Aorta (tissue), 5 donors: ENCODE measurements at regions of chr3 and their contacts with region 1.

Region 1: DNA sequence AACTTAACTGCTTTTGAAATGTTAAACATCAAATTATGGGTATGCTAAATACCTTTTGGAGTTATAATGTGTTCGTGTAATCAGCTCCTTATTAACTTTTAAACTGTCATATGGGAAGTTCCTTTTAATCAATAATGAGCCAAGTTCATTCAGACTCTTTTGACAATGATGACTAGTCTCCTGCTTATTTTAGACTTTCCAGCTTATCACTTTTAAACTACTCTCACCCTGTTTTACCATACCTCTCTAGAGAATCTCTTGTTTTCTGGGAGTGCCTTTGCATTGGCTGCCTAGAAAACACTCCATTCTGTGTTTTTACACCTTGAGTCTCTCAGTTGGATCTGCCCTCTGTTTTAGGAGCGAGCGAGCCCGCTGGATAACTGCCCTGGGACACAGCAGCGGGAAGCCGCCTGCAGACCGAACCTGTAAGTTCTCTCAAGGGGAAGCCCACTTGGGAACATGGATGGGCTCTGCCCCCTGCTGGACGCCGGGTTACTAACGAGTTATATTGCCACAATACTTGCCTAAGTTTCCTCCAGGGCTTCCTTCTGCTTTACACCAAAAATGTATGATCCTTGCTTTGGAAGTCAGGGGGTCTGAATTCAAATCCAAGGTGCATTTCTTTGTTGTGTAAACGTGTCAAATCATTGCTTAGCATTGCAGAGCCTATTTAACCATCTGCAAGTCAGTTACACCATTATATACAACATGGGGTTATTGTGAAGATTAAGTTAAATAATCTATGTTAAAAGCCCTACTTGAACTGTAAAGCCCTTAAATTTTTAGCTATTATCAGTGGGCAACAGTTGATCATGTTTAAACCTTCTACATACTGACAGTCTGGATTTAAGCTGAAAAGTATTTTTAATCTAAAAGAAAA is 71.3 kb downstream of the DHX36 start:
- DNase-seq: peak; percentile 93 to 98
- ATAC-seq: peak; percentile 94
- H3K4me3 ChIP-seq: no peak overlapping the region
- H3K27ac ChIP-seq: no peak overlapping the region
- H3K4me1 ChIP-seq: no peaks in the 10 kb centered on the region
- H3K27me3 ChIP-seq: no peaks in the 10 kb centered on the region

Region 2: DNA sequence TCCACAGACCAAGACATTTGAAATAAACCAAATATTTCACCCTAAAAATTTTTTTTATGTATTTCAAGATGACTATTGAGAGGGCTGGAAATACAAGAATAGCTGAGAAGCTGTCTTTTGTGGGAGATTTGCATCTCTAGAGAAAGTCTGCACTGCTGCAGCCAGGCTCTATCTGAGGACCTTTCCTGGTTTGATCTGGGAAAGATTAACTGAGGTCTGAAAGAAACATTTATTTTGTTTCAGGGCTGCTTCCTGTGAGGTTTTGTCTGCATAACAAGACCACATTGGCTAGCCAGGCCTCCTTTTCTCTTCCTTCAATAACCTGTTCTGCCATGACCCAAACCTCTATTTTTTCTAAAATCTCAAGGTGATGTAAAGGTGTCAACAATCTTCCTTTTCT is 249.3 kb before region 1 on chr3:
- intact Hi-C with region 1: loop called in 1 of 2 experiments (anchors 10 kb)
- DNase-seq: no peak
- ATAC-seq: no peak
- H3K4me3 ChIP-seq: no peak overlapping the region
- H3K27ac ChIP-seq: no peak overlapping the region
- H3K4me1 ChIP-seq: no peaks in the 10 kb centered on the region
- H3K27me3 ChIP-seq: no peaks in the 10 kb centered on the region

Region 3: DNA sequence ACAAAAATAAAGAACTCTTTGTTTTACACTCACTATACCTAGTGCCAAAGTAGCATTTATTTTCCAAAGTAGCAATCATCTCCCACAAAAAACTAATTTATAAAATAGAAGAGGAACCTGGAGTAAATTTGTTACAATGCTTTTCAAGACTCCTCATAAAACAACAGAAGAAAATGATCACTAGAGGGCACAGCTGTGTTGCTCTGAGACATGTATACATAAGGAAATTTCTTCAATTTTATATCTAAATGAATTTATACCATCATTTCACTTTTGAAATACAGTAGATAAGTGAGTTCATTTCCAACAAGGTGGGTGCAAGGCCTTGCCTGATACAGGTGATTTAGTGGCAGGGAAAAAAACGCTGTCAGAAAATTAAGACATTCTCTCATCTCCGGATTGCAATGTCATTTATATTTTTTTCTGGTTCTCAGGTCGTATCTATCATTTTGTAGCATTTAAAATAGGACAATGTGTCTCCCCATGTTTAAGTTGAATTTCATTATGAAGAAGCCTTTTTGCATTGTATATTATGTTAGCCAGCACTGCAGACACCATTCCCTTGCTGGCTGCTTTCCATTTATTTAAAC is 157.1 kb before region 1 on chr3:
- intact Hi-C with region 1: loop called (anchors 2 kb)
- DNase-seq: no peak
- ATAC-seq: no peak
- H3K4me3 ChIP-seq: no peak overlapping the region
- H3K27ac ChIP-seq: no peak overlapping the region
- H3K4me1 ChIP-seq: no peaks in the 10 kb centered on the region
- H3K27me3 ChIP-seq: no peaks in the 10 kb centered on the region

Region 4: GRCh38 chr3:154120961-154121700 is 131.9 kb before region 1 on chr3 and contains the start of gene ARHGEF26:
- intact Hi-C with region 1: loop called in 1 of 2 experiments (anchors 5 kb)
- DNase-seq: peak; percentile 91 to 97
- ATAC-seq: peak; percentile 95
- H3K4me3 ChIP-seq: peak within 1 kb of the TSS; percentile 59 to 80
- H3K27ac ChIP-seq: peak within 1 kb of the TSS in 1 of 2 donors; percentile 18
- H3K4me1 ChIP-seq: no peaks in the 10 kb centered on the region
- H3K27me3 ChIP-seq: no peaks in the 10 kb centered on the region
- total RNA-seq, gene ARHGEF26: 16.4 to 26.9 TPM

Region 5: GRCh38 chr3:154135511-154136188 is 117.3 kb before region 1 on chr3:
- intact Hi-C with region 1: no loop called
- DNase-seq: no peak
- ATAC-seq: no peak
- H3K4me3 ChIP-seq: no peak overlapping the region
- H3K27ac ChIP-seq: no peak overlapping the region
- H3K4me1 ChIP-seq: peaks cover 2 to 10% of the 10 kb centered on the region in 2 donors
- H3K27me3 ChIP-seq: no peaks in the 10 kb centered on the region